SK-MEL-5 (cell line): ENCODE measurements at regions of chr17 and their contacts with region 1.

Region 1: DNA sequence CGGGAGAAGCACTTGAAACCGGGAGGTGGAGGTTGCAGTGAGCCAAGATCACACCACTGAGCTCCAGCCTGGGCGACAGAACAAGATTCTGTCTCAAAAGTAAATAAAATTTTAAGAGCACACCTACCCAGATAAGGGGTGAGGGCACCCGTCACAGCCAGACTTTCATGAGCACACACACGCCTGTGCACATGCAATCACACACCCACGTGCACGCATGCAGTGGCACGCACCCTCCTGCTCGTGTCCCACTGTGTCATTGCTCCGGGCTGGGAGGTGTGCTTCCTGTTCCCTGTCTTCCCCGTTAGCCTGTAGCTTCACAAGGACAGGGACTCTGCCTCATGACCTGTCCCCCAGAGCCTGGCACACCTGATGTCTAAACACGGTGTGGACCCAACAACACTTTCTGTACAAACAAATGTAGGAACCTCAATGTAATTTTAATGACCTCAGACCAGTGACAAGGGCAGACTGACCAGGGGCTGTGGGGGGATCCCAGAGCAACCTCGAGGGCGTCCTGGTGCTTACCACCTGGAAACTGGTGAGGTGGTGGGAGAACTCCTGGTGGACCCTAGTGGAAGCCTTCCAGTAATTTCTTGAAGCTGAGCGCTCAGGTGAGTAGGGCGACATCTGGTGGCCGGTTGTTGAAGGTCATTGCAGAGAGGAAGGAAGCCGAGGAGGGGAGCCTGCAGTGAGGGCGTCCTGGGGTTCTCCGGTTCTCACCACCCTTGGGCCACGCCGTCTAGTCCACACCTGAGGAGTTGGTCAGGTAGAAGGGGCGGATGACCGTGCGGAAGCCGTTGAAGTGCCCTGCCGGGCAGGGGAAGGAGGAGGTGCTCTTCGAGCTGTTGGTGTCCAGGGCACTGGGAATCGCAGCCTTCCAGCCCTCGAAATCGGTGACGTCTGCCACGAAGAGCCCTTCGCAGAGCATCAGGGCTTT is 8.6 kb downstream of the LGALS3BP start:
- DNase-seq: peak; percentile 93

Region 2: GRCh38 chr17:78840725-78841611 is 130.1 kb before region 1 on chr17 and contains the start of gene USP36:
- in situ Hi-C with region 1: loop called (anchors 25 kb)
- DNase-seq: peak; percentile 100
- total RNA-seq, gene USP36: 96.8 and 116 TPM in 2 replicates

Region 3: DNA sequence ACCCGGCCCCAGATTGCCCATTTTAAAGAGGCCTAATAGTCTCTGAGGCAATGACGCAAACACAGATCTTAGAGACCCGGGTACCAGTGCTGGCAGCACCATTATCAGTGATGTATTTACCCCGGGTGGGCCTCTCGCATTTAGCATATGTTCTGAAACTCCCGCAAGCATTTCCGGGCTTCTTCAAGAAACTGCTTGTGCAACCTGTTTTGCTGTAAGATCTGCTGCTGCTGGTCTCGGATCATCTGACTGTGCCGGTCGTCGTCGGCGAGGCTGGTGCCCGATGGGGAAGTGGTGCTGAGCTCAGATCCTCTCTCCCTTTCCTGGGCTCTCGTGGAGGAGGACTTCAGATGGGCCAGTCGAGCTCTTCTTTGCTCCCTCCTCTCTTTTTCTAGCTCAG is 80.6 kb before region 1 on chr17:
- in situ Hi-C with region 1: no loop called
- DNase-seq: peak; percentile 72

Region 4: GRCh38 chr17:79137015-79137788 is 166.1 kb after region 1 on chr17:
- in situ Hi-C with region 1: no loop called
- DNase-seq: no peak